ENCODE measurements at regions of chrX and their contacts with region 1.

Region 1: DNA sequence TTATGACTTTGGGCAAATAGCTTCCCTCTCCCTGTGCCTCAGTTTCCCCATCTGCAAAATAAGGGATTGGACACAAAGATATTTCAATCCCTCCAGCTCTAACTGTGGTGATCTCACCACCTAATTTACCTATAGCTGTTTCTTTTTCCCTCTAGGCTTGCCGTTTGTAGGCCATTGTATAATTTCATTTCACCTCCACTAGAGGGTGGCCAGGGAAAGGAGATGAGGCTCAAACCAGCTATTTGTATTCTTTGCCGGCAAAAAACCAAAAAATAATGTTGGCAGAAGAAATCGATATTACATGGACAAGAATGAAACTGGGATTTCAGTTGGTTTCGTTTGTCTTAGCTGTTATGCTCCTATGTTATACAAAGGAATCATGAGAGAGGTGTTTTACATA is 36.1 kb upstream of the DOCK11 start:
- DNase-seq: peak in 2 of 4 donors; percentile 18 to 43
- ATAC-seq: peak; percentile 65
- H3K4me3 ChIP-seq: no peak overlapping the region
- H3K27ac ChIP-seq: no peak overlapping the region
- H3K4me1 ChIP-seq: no peaks in the 10 kb centered on the region
- H3K27me3 ChIP-seq: no peaks in the 10 kb centered on the region
- CTCF ChIP-seq: peak in 1 of 2 donors; percentile 34

Region 2: GRCh38 chrX:117898226-117898625 is 561.3 kb before region 1 on chrX:
- intact Hi-C with region 1: no loop called
- DNase-seq: no peak
- ATAC-seq: no peak
- H3K4me3 ChIP-seq: no peak overlapping the region
- H3K27ac ChIP-seq: no peak overlapping the region
- H3K4me1 ChIP-seq: no peaks in the 10 kb centered on the region
- H3K27me3 ChIP-seq: no peaks in the 10 kb centered on the region
- CTCF ChIP-seq: no peak

Region 3: DNA sequence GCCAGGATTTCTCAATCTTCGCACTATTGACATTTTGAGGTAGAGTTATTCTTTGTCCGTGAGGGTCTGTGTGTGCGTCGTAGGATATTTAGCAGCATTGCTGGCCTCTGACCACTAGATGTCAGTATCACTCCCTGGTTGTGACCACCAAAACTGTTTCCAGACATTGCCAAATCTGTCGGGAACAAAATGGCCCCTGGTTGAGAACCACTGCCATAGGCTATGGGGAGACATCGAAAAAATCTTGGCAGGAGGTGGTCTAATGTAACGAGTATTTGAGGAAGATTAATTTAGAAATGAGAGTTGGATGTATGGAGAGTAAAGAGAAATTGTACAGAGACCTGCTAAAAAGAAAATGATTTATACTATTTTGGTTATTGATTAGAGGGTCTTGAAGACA is 144.5 kb after region 1 on chrX:
- intact Hi-C with region 1: loop called in 1 of 2 experiments (anchors 10 kb)
- DNase-seq: peak in 2 of 4 donors; percentile 33 to 57
- ATAC-seq: peak; percentile 90
- H3K4me3 ChIP-seq: no peak overlapping the region
- H3K27ac ChIP-seq: no peak overlapping the region
- H3K4me1 ChIP-seq: no peaks in the 10 kb centered on the region
- H3K27me3 ChIP-seq: no peaks in the 10 kb centered on the region
- CTCF ChIP-seq: peak; percentile 62 to 87

Measured in left lung (tissue), 14 donors.